Posterior vena cava (tissue), 2 donors: ENCODE measurements at regions of chr7 and their contacts with region 1.

Region 1: DNA sequence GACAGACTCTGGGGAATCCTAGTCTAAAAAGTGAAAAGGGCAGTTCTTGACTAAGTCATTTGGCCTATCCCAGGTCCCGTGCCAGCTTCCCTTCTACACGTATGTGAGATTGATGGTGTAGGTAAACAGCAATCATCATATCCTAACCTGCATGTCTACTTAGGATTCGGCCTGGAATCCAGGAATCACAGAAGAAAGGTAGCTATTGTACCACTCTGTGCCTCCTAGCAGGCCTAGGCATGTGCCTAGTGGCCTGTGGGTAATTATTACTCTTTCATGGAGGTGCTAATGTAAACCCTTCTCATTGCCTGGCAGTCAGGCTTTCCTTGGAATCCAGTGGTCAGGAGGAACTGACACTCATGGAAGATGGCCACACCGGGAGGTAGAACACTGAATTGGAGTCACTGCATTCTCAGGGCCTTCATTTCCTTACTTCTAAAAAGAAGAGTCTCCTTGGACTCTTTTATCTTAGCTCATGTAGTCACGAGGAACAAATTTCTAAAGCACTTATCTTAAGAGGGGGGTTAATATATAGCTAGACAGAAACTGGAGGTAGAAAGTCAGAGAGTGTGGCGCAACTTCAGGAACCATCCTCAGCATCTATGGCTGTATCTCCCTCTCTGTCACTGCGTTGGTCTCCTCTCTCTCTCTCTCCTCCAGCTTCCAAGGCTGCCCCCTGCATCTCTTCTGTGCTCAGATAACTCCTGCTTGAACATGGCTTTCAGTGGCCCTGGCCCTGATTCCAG is 122.5 kb downstream of the C1GALT1 start:
- DNase-seq: no peak

Region 2: GRCh38 chr7:7324466-7325092 is 19.7 kb after region 1 on chr7:
- intact Hi-C with region 1: loop called in 1 of 2 experiments (anchors 1 kb)
- DNase-seq: no peak